Posterior cingulate gyrus (tissue), 11 donors: ENCODE measurements at regions of chr18 and their contacts with region 1.

Region 1: DNA sequence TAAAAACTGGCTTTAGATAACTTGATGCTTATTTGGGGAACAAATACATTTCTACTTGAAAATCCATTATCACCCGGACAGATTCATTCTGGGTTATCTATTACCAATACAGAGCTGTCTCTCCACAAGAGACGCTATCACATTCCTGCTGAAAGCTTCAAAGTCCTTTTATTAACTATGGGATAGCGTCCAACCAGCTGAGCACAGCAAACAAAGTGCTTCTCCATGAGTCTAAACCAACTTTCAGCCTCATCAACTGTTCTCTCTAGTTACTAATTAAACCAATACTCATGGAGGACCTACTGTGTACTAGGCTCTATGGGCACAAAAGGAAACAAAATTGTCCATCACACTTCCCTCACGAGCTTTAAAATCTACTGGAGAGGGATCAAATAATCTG is 132.8 kb downstream of the L3MBTL4 start:
- DNase-seq: no peak

Region 2: GRCh38 chr18:6414118-6414722 is 132.3 kb after region 1 on chr18:
- intact Hi-C with region 1: loop called (anchors 10 kb)
- DNase-seq: peak in 9 of 10 donors; percentile 49 to 94 (median 62)